Activated CD4-positive, alpha-beta memory T cell treated with anti-CD3 and anti-CD28 coated beads for 36 hours (primary cell): ENCODE measurements at regions of chr13 and their contacts with region 1.

Region 1: GRCh38 chr13:24557081-24557480 is 44.5 kb upstream of the PARP4 start:
- DNase-seq: no peak
- H3K4me3 Mint-ChIP-seq: no peak overlapping the region
- H3K27ac Mint-ChIP-seq: no peak overlapping the region
- H3K4me1 Mint-ChIP-seq: peaks cover 11% of the 10 kb centered on the region
- H3K27me3 Mint-ChIP-seq: peaks cover 45% of the 10 kb centered on the region

Region 2: DNA sequence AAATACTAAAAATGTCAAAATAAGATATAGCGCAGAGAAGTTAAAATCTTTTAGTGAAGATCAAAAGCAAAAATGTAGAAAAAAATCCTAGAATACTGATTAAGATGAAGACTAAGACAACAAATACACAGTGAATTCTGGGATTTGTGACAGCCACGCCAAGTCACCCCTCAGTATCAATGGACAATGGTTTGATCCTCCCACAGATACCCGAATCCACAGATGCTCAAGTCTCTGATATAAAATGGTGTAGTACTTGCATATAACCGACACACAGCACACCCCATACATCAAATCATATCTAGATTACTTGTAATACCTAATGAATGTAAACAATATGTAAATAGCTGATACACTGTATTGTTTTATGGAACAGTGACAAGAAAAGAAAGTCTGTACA is 673.8 kb before region 1 on chr13:
- CTCF ChIA-PET with region 1: no interaction called
- POLR2A ChIA-PET with region 1: no interaction called
- intact Hi-C with region 1: no loop called
- DNase-seq: no peak
- H3K4me3 Mint-ChIP-seq: no peak overlapping the region
- H3K27ac Mint-ChIP-seq: no peak overlapping the region
- H3K4me1 Mint-ChIP-seq: peaks cover 11% of the 10 kb centered on the region
- H3K27me3 Mint-ChIP-seq: no peaks in the 10 kb centered on the region

Region 3: GRCh38 chr13:24328145-24328544 is 228.9 kb before region 1 on chr13:
- CTCF ChIA-PET with region 1: no interaction called
- POLR2A ChIA-PET with region 1: no interaction called
- intact Hi-C with region 1: loop called (anchors 10 kb)
- DNase-seq: no peak
- H3K4me3 Mint-ChIP-seq: no peak overlapping the region
- H3K27ac Mint-ChIP-seq: no peak overlapping the region
- H3K4me1 Mint-ChIP-seq: peaks cover 1% of the 10 kb centered on the region
- H3K27me3 Mint-ChIP-seq: peaks cover 30% of the 10 kb centered on the region

Region 4: GRCh38 chr13:24618014-24618955 is 61.2 kb after region 1 on chr13:
- CTCF ChIA-PET with region 1: no interaction called
- POLR2A ChIA-PET with region 1: no interaction called
- intact Hi-C with region 1: no loop called
- DNase-seq: peak; percentile 87
- H3K4me3 Mint-ChIP-seq: peak overlapping the region; percentile 23
- H3K27ac Mint-ChIP-seq: peak overlapping the region; percentile 81
- H3K4me1 Mint-ChIP-seq: peaks cover 28% of the 10 kb centered on the region
- H3K27me3 Mint-ChIP-seq: no peaks in the 10 kb centered on the region